Activated naive CD8-positive, alpha-beta T cell treated with anti-CD3 and anti-CD28 coated beads, Interleukin-2, amount 10 ng/mL, durations not matched to agents 7 days and 5 days (primary cell): ENCODE measurements at regions of chr3 and their contacts with region 1.

Region 1: GRCh38 chr3:128482666-128483656 is 10.0 kb downstream of the GATA2 start:
- DNase-seq: no peak
- ATAC-seq: no peak
- H3K4me3 Mint-ChIP-seq: peak overlapping the region; percentile 54
- H3K27ac Mint-ChIP-seq: no peak overlapping the region
- H3K4me1 Mint-ChIP-seq: peaks cover 12% of the 10 kb centered on the region
- H3K27me3 Mint-ChIP-seq: peaks cover 58% of the 10 kb centered on the region

Region 2: GRCh38 chr3:128447561-128448013 is 35.4 kb before region 1 on chr3:
- POLR2A ChIA-PET with region 1: interaction called, 10 read pairs
- DNase-seq: peak; percentile 55
- ATAC-seq: peak; percentile 58
- H3K4me3 Mint-ChIP-seq: peak overlapping the region; percentile 17
- H3K27ac Mint-ChIP-seq: peak overlapping the region; percentile 96
- H3K4me1 Mint-ChIP-seq: peaks cover 24% of the 10 kb centered on the region
- H3K27me3 Mint-ChIP-seq: peaks cover 3% of the 10 kb centered on the region

Region 3: DNA sequence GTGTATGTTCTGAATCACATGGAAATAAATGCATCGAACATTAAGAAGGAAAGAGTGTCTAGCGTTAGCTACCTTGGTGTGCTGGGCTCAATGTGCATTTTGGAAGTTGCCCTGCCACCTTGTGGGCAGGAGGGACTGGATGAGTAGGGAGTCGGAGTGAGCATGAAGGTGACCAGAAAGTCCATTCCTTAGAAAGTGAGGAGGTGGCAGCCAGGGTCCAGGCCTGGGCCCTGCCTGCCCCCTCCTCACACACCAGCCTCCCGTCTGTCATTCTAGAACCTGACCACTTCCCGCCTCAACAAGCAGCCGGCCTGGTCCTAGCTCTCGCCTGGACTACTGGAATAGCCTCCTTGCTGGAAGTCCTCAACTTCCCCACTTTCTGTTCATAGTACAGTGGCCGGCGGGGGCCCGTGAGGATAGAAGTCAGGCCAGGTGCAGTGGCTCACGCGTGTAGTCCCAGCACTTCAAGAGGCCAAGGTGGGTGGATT is 20.2 kb after region 1 on chr3:
- POLR2A ChIA-PET with region 1: no interaction called
- DNase-seq: no peak
- ATAC-seq: no peak
- H3K4me3 Mint-ChIP-seq: no peak overlapping the region
- H3K27ac Mint-ChIP-seq: no peak overlapping the region
- H3K4me1 Mint-ChIP-seq: no peaks in the 10 kb centered on the region
- H3K27me3 Mint-ChIP-seq: peaks cover 48% of the 10 kb centered on the region